ENCODE measurements at regions of chr9 and their contacts with region 1.

Region 1: DNA sequence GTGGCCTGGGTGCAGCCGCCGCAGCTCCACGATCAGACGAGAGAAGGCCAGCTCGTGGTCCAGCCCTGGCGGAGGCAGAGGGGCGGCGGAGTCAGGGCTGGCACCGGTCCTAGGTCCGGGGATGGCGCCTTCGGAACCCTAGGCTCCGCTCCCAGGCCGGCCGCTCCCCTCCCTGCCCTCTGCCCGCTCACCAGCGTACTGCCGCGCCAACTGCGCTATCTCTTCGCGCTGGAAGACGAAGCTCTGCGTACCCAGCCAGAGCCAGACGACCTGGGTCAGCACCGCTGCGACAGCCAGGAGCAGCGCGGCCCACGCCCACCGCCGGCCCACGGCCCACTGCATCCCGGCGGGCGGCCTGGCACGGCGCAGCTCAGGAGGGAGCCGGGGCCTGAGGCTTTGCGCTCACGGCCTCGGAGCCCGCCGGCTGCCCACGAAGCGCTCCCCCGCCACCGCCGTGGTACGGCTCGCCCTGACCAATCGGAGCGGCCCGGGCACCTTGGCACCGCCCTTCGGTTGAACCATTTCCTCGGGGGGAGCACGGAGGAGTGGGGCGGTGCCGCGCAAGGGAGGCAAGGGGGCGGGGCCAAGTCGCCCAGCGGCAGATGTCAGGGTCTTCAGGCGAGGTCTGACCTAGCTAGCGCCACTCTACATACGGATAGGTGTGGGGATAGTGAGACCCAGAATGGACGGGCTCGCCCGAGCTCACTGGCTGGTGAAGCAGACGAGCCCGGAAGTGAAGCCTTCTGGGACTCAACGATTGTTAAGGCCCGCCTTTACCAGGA is at the start of gene SIGMAR1:
- DNase-seq: peak; percentile 94
- H3K4me3 ChIP-seq: peak within 1 kb of the TSS; percentile 62 to 91 (median 88)
- H3K27ac ChIP-seq: peak within 1 kb of the TSS; percentile 35
- H3K4me1 ChIP-seq: peaks cover 4% of the 10 kb centered on the region
- H3K27me3 ChIP-seq: no peaks in the 10 kb centered on the region
- CTCF ChIP-seq: no peak
- total RNA-seq, gene SIGMAR1: 83.0 to 131 TPM

Region 2: DNA sequence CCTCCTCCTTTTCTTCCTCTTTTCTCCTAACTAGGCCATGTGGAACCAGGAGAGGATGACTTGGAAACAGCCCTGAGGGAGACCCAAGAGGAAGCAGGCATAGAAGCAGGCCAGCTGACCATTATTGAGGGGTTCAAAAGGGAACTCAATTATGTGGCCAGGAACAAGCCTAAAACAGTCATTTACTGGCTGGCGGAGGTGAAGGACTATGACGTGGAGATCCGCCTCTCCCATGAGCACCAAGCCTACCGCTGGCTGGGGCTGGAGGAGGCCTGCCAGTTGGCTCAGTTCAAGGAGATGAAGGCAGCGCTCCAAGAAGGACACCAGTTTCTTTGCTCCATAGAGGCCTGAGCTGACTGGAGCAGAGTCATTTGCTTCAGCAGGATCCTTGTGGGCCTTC is 294.5 kb before region 1 on chr9:
- CTCF ChIA-PET with region 1: no interaction called
- dilution Hi-C with region 1: no loop called
- in situ Hi-C with region 1: no loop called
- intact Hi-C with region 1: no loop called
- DNase-seq: no peak
- H3K4me3 ChIP-seq: no peak overlapping the region
- H3K27ac ChIP-seq: no peak overlapping the region
- H3K4me1 ChIP-seq: no peaks in the 10 kb centered on the region
- H3K27me3 ChIP-seq: no peaks in the 10 kb centered on the region
- CTCF ChIP-seq: no peak

Region 3: GRCh38 chr9:34620061-34620994 is 17.2 kb before region 1 on chr9 and contains the start of gene DCTN3:
- CTCF ChIA-PET with region 1: no interaction called
- dilution Hi-C with region 1: no loop called
- in situ Hi-C with region 1: no loop called
- intact Hi-C with region 1: no loop called
- DNase-seq: peak; percentile 86
- H3K4me3 ChIP-seq: peak within 1 kb of the TSS; percentile 71 to 79 (median 77)
- H3K27ac ChIP-seq: peak within 1 kb of the TSS; percentile 62
- H3K4me1 ChIP-seq: peaks cover 6% of the 10 kb centered on the region
- H3K27me3 ChIP-seq: no peaks in the 10 kb centered on the region
- CTCF ChIP-seq: no peak
- total RNA-seq, gene DCTN3: 53.8 to 91.3 TPM

Region 4: GRCh38 chr9:34665381-34666250 is 28.1 kb after region 1 on chr9:
- CTCF ChIA-PET with region 1: interaction called, 6 read pairs
- dilution Hi-C with region 1: no loop called
- in situ Hi-C with region 1: no loop called
- intact Hi-C with region 1: loop called (anchors 2 kb)
- DNase-seq: peak; percentile 89
- H3K4me3 ChIP-seq: peak overlapping the region; percentile 52 to 90 (median 66)
- H3K27ac ChIP-seq: peak overlapping the region; percentile 93
- H3K4me1 ChIP-seq: peaks cover 32% of the 10 kb centered on the region
- H3K27me3 ChIP-seq: no peaks in the 10 kb centered on the region
- CTCF ChIP-seq: no peak

Measured in mammary epithelial cell (primary cell).